ENCODE measurements at regions of chr1 and their contacts with region 1.

Region 1: DNA sequence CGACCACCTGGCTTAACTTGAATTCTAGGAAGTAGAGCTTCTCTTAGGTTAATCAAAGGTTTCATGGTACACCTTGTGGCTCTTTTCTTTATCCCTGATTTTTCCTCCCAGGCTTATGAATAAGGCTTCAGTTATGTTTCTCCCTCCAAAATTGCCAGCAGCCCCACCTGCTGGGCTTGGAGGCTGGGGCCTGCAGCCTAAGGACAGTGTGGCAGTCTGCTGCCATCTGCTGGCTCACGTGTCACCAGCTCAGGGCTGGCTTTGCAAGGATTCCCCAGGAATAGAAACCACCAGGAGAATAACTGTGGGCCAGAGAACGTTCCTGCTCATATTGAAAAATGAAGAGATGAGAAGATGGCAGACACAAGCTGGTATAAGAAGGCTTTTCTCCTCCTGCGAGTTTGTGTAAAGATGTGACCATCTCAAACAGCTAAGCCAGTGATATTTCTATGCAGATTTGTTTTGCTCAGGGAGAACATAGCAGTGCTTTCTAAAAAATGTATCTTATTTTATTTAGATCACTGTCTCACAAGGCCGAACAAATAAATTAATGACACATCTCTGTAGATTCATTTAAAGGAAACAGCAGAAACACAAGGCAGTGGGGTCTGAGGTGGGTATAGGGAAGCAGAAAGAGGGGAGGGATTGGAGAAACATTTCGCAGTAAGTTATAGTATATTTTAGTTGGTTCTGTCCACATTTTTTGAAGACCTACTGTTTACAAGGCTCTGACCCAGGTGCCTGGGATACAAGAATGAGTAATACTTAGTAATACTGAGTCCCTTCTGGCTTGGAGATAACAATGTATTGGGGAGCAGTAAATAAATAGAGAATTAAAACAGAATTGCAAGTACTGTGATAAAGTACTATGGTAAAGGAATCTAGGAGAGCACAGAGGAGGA is 291.1 kb upstream of the SGIP1 start:
- DNase-seq: peak; percentile 71
- H3K4me3 ChIP-seq: no peak overlapping the region
- H3K27ac ChIP-seq: no peak overlapping the region
- H3K27me3 ChIP-seq: no peaks in the 10 kb centered on the region
- CTCF ChIP-seq: peak; percentile 100

Region 2: DNA sequence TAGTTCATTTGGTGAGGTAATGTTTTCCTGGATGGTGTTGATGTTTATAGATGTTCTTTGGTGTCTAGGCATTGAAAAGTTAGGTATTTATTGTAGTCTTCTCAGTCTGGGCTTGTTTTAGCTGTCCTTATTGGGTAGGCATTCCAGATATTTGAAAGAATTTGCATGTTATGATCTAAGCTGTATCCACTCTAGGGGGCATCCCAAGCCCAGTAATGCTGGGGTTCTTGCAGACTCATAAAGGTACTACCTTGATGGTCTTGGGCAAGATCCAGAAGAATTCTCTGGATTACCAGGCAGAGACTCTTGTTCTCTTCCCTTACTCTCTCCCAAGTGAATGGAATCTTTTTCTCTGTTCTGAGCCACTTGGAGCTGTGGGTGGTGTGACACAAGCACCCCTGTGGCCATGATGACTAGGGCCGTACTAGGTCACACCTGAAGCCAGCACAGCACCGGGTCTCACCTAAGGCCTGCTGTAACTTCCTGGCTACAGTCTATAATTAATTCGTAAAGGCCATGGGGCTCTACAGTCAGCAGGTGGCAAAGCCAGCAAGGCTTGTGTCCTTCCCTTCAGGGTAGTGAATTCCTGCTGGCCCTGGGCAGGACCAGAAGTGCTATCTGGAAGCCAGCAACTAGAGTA is 525.0 kb before region 1 on chr1:
- CTCF ChIA-PET with region 1: interaction called, 21 read pairs
- POLR2A ChIA-PET with region 1: no interaction called
- DNase-seq: peak; percentile 10
- H3K4me3 ChIP-seq: no peak overlapping the region
- H3K27ac ChIP-seq: no peak overlapping the region
- H3K27me3 ChIP-seq: peaks cover 2% of the 10 kb centered on the region
- CTCF ChIP-seq: peak; percentile 53

Region 3: DNA sequence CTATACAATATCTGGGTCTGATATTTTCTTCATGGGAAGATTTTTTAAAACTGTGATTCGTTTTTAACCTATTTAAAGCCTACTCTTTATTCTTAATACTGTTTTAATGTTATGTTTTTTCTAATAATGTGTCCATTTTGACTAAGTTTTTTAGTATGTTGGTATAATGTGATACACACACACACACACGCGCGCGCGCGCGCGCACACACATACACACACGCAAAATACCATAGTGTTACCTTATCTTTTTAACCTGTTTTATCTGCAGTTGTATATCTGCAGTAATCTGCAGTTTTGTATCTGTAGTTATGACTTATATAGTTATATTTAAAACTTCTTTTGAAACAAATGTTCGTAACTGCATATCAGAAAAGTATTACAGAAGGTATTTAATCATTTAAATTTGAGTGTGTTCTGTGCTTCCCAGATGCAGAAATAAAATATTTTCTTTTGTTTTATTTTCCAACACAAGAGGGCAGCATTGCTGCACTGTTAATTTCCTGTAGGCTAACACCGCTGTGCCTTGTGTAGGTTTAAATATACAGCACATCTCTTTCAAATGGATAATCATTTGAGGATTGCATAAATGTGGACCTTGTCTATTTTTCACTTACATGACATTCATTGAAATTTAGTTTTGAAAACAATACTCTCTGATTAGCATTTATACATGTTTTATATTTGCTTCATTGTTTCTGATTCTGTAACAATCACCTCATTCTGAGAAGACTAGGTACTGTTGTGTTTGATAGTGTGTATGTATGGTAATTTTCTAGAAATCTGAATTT is 284.1 kb before region 1 on chr1:
- CTCF ChIA-PET with region 1: interaction called, 291 read pairs
- POLR2A ChIA-PET with region 1: no interaction called
- DNase-seq: peak; percentile 21
- H3K4me3 ChIP-seq: no peak overlapping the region
- H3K27ac ChIP-seq: no peak overlapping the region
- H3K27me3 ChIP-seq: no peaks in the 10 kb centered on the region
- CTCF ChIP-seq: peak; percentile 66

Region 4: DNA sequence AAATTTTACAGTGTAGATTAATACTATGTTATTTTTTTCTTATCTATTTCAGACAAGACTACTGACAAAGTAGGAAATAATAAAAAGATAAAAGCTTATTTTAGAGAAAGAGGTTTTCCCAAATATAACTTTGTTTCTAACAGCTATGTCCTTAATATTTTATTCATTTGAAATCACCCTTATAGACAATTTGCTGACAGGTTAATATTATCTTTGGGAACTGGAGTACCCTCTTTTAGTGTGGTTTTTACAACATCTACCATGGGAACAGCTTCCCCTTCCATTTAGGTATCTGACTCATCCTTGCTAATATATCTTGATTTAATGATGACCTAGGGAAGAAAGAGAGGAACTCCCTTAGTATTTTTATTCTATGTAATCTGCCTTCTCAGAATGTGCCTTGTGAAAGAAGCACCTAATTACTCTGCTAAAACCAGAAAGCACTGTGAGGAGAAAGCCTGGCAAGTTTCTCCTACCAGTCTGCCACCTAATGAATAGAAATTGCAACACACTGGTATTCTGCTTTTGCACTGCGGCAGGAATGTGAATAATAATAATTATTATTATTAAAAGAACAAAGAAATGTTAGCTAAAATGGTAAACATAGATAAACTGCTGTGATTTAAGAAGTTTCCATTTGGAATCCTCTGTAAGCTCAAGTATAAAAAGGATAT is 257.4 kb before region 1 on chr1:
- CTCF ChIA-PET with region 1: interaction called, 14 read pairs
- POLR2A ChIA-PET with region 1: no interaction called
- DNase-seq: no peak
- H3K4me3 ChIP-seq: no peak overlapping the region
- H3K27ac ChIP-seq: no peak overlapping the region
- H3K27me3 ChIP-seq: no peaks in the 10 kb centered on the region
- CTCF ChIP-seq: no peak

Region 5: GRCh38 chr1:66217021-66217420 is 25.9 kb before region 1 on chr1:
- CTCF ChIA-PET with region 1: interaction called, 10 read pairs
- POLR2A ChIA-PET with region 1: no interaction called
- DNase-seq: no peak
- H3K4me3 ChIP-seq: no peak overlapping the region
- H3K27ac ChIP-seq: no peak overlapping the region
- H3K27me3 ChIP-seq: no peaks in the 10 kb centered on the region
- CTCF ChIP-seq: no peak

Region 6: DNA sequence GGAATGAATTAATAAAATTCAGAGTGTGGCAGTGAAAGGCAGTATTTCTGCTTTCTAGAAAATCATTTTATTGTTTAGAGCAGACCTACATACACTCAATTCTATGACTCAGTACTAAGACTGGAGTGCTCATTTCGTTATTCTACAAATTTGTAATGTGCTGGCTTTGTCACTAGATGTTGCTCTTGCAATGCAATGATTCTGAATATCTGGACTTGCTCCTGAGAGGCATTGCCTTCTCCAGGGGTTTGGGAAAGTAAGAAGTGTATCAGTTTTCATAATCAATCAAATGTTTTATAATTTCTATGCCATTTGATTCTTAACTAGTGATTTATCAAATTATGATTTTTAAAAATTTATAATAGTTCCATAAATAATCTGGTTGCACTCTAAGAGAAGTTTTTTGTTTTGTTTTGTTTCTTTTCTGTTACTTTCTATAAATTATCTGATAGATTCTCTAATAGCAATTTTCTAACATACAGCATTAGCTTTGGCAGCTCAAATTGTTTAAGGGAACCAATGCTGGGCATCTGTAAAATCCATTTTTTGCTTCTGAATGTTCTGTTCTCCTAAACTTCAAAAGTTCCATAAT is 10.5 kb after region 1 on chr1:
- CTCF ChIA-PET with region 1: interaction called, 36 read pairs
- POLR2A ChIA-PET with region 1: no interaction called
- DNase-seq: peak; percentile 52
- H3K4me3 ChIP-seq: no peak overlapping the region
- H3K27ac ChIP-seq: no peak overlapping the region
- H3K27me3 ChIP-seq: no peaks in the 10 kb centered on the region
- CTCF ChIP-seq: peak; percentile 80

Region 7: GRCh38 chr1:66452162-66452561 is 209.3 kb after region 1 on chr1:
- CTCF ChIA-PET with region 1: interaction called, 484 read pairs
- POLR2A ChIA-PET with region 1: no interaction called
- DNase-seq: no peak
- H3K4me3 ChIP-seq: no peak overlapping the region
- H3K27ac ChIP-seq: no peak overlapping the region
- H3K27me3 ChIP-seq: no peaks in the 10 kb centered on the region
- CTCF ChIP-seq: peak; percentile 40